ENCODE measurements at regions of chr1 and their contacts with region 1.

Region 1: GRCh38 chr1:193059268-193060225 is at the starts of genes RO60 and UCHL5:
- DNase-seq: peak; percentile 100
- H3K4me3 ChIP-seq: peak within 1 kb of the TSS; percentile 87
- H3K27ac ChIP-seq: peak within 1 kb of the TSS; percentile 94
- H3K4me1 ChIP-seq: peaks cover 8% of the 10 kb centered on the region
- H3K27me3 ChIP-seq: no peaks in the 10 kb centered on the region
- CTCF ChIP-seq: no peak; the same call in 1 of the 2 replicates
- total RNA-seq, gene RO60: 93.5 and 97.6 TPM in 2 replicates
- total RNA-seq, gene UCHL5: 93.9 and 100 TPM in 2 replicates

Region 2: DNA sequence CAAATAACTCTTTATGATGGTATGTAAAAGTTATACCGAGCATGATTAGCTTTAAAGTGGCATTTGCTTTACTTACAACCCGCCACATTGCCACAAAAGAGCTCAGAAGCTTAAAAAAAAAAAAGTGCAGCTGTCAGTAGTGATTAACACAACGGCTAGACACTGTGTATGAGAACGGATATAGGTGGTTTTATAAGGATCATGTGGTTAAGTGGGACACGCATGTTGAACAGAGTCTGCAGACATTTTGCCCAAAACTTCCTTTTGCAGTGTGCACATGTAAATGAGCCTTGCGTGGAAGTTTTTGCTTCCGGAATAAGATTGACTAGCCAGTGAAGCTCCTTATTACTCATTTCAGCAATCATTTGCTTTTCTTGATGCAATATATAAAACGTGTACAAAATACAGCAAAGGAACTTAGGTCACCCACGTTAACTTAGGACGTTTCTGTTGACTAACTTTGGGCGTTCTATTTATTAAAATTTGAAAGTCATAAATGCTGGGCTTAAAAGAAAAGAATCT is 542.7 kb before region 1 on chr1:
- CTCF ChIA-PET with region 1: no interaction called
- POLR2A ChIA-PET with region 1: interaction called, 22 read pairs
- intact Hi-C with region 1: no loop called
- DNase-seq: peak; percentile 96
- H3K4me3 ChIP-seq: no peak overlapping the region
- H3K27ac ChIP-seq: peak overlapping the region; percentile 96
- H3K4me1 ChIP-seq: peaks cover 64% of the 10 kb centered on the region
- H3K27me3 ChIP-seq: no peaks in the 10 kb centered on the region
- CTCF ChIP-seq: no peak

Region 3: GRCh38 chr1:193121616-193122593 is 62.4 kb after region 1 on chr1 and contains the start of gene CDC73:
- CTCF ChIA-PET with region 1: no interaction called
- POLR2A ChIA-PET with region 1: no interaction called
- intact Hi-C with region 1: loop called (anchors 5 kb)
- DNase-seq: peak; percentile 98
- H3K4me3 ChIP-seq: peak within 1 kb of the TSS; percentile 86
- H3K27ac ChIP-seq: peak within 1 kb of the TSS; percentile 95
- H3K4me1 ChIP-seq: peaks cover 9% of the 10 kb centered on the region
- H3K27me3 ChIP-seq: no peaks in the 10 kb centered on the region
- CTCF ChIP-seq: peak; percentile 99
- total RNA-seq, gene CDC73: 61.5 and 71.0 TPM in 2 replicates

Region 4: GRCh38 chr1:193131266-193131860 is 71.8 kb after region 1 on chr1:
- CTCF ChIA-PET with region 1: no interaction called
- POLR2A ChIA-PET with region 1: interaction called, 10 read pairs
- intact Hi-C with region 1: no loop called
- DNase-seq: no peak
- H3K4me3 ChIP-seq: no peak overlapping the region
- H3K27ac ChIP-seq: no peak overlapping the region
- H3K4me1 ChIP-seq: no peaks in the 10 kb centered on the region
- H3K27me3 ChIP-seq: no peaks in the 10 kb centered on the region
- CTCF ChIP-seq: no peak

Region 5: DNA sequence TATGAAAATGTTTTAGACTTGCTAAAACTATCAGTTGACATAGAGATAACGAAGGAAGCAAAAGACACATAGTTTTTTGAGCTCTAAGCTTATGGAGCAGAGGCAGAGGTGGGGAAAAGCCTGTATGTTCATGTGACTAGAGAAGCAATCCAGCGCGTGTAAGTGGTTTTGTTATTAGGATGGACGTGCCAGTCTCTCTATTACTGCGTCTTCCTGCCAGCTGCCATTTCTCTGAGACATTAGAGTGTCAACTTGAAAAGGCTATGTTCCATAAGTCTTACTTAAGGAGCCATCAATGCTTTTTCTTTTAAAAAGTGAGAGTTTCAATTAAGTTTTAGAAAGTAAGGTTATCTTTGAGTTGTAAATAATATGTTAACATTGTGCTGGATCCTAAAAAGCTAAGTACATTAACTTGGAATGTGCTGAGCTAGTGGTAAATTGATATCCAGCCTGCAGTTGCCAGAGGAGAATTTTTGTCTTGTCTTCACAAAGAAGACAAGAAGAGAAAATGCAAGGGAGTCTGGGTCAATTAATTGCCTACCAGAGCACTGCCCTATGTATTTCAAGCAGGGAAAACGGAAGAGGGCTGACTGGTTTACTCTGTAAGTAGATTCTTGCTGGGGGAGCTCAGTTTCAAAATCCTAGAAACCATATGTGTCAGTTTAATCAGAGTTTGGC is 288.7 kb after region 1 on chr1:
- CTCF ChIA-PET with region 1: no interaction called
- POLR2A ChIA-PET with region 1: no interaction called
- intact Hi-C with region 1: loop called (anchors 10 kb)
- DNase-seq: peak; percentile 90
- H3K4me3 ChIP-seq: no peak overlapping the region
- H3K27ac ChIP-seq: peak overlapping the region; percentile 79
- H3K4me1 ChIP-seq: peaks cover 53% of the 10 kb centered on the region
- H3K27me3 ChIP-seq: no peaks in the 10 kb centered on the region
- CTCF ChIP-seq: no peak

Measured in A673 (cell line).